K562 (cell line): ENCODE measurements at regions of chr6 and their contacts with region 1.

Region 1: GRCh38 chr6:30616811-30617564 is at the start of gene PPP1R10:
- DNase-seq: peak; percentile 96 to 100 (median 98)
- ATAC-seq: peak; percentile 77
- H3K4me3 ChIP-seq: peak within 1 kb of the TSS; percentile 68
- H3K27ac ChIP-seq: peak within 1 kb of the TSS; percentile 99
- H3K4me1 ChIP-seq: peaks cover 4 to 26% of the 10 kb centered on the region in 2 experiments; a peak in 4 of 5 replicates
- H3K27me3 ChIP-seq: no peaks in the 10 kb centered on the region
- CTCF ChIP-seq: peak in 1 of 3 experiments; percentile 7; a peak in 1 of 6 replicates
- EP300 ChIP-seq: peak; percentile 39; the same call in 1 of the 2 replicates
- POLR2A ChIP-seq: peak; percentile 100
- RAD21 ChIP-seq: no peak
- polyA plus RNA-seq, gene PPP1R10: 14.1 to 21.9 TPM

Region 2: GRCh38 chr6:30556066-30556905 is 60.7 kb before region 1 on chr6 and contains the start of gene GNL1:
- CTCF ChIA-PET with region 1: no interaction called
- POLR2A ChIA-PET with region 1: interaction called, 11 read pairs
- in situ Hi-C with region 1: no loop called
- intact Hi-C with region 1: no loop called
- DNase-seq: peak; percentile 97 to 99 (median 98)
- ATAC-seq: peak; percentile 90
- H3K4me3 ChIP-seq: peak within 1 kb of the TSS; percentile 80
- H3K27ac ChIP-seq: peak within 1 kb of the TSS; percentile 94
- H3K4me1 ChIP-seq: peaks cover 17 to 23% of the 10 kb centered on the region in 2 experiments; a peak in 4 of 5 replicates
- H3K27me3 ChIP-seq: no peaks in the 10 kb centered on the region
- CTCF ChIP-seq: no peak
- EP300 ChIP-seq: no peak
- POLR2A ChIP-seq: peak; percentile 8
- RAD21 ChIP-seq: no peak
- polyA plus RNA-seq, gene GNL1: 0.73 to 1.3 TPM

Region 3: DNA sequence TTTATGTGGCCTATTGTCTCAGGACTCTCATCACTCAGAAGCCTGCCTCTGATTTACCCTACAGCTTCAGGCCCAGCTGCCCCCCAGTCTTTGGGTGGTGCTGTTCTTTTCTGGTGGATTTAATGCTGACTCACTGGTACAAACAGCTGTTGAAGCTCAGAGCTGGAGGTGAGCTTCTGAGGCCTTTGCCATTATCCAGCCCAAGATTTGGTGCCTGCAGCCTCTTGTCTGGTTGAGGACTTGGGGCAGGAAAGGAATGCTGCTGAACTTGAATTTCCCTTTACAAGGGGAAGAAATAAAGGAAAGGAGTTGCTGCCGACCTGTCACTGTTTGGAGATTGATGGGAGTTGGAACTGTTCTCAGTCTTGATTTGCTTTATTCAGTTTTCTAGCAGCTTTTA is 26.0 kb before region 1 on chr6:
- CTCF ChIA-PET with region 1: no interaction called
- POLR2A ChIA-PET with region 1: interaction called, 310 read pairs
- in situ Hi-C with region 1: no loop called
- intact Hi-C with region 1: no loop called
- DNase-seq: peak in 2 of 4 experiments; percentile 29 to 36
- ATAC-seq: peak; percentile 60; the same call in 2 of the 3 replicates
- H3K4me3 ChIP-seq: no peak overlapping the region
- H3K27ac ChIP-seq: peak overlapping the region; percentile 8; the same call in 2 of the 3 replicates
- H3K4me1 ChIP-seq: peaks cover 3 to 4% of the 10 kb centered on the region in 2 experiments; a peak in 3 of 5 replicates
- H3K27me3 ChIP-seq: no peaks in the 10 kb centered on the region
- CTCF ChIP-seq: no peak
- EP300 ChIP-seq: no peak
- POLR2A ChIP-seq: no peak
- RAD21 ChIP-seq: no peak

Region 4: GRCh38 chr6:30656513-30656912 is 39.5 kb after region 1 on chr6:
- CTCF ChIA-PET with region 1: no interaction called
- POLR2A ChIA-PET with region 1: interaction called, 17 read pairs
- in situ Hi-C with region 1: no loop called
- intact Hi-C with region 1: no loop called
- DNase-seq: no peak
- ATAC-seq: no peak
- H3K4me3 ChIP-seq: no peak overlapping the region
- H3K27ac ChIP-seq: no peak overlapping the region
- H3K4me1 ChIP-seq: no peaks in the 10 kb centered on the region; a peak in 1 of 5 replicates
- H3K27me3 ChIP-seq: no peaks in the 10 kb centered on the region
- CTCF ChIP-seq: no peak
- EP300 ChIP-seq: no peak
- POLR2A ChIP-seq: no peak
- RAD21 ChIP-seq: no peak

Region 5: DNA sequence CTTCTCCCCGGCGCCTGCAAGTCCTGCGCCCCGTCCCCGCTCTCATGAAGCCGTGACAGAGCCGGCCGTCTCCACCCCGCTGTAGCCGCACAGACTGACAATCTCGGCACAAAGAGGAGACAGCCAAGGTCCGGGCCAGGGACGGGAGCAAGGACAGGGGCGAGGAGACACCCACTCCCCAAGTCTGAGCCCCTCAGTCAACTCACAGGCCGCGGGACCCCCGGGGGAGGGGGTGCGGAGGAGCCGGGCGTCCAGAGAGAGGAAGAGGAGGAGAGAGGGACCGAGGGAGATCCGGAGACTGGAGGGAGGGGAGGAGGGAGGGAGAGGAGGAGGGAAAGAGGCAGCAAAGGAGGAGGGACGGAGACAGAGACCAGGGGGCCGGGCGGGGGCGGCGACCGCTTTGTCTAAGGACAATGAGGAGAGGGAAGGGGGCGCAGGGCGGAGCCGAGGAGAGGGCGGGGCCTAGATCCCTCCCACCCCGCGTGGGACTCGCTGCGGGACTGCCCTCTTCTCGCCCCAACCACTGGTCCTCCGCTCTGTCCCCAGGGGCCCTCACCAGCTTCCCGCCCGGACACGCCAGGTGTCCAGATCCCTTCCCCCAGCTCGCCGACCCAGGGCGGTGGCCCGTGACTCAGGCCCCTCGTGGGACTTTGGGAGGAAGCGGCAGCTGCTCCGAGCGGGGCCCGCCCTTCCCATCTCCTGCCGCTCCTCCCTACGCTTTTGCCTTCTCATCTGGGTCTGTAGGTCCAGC is 70.1 kb after region 1 on chr6:
- CTCF ChIA-PET with region 1: no interaction called
- POLR2A ChIA-PET with region 1: interaction called, 22 read pairs
- in situ Hi-C with region 1: no loop called
- intact Hi-C with region 1: no loop called
- DNase-seq: peak; percentile 90 to 96 (median 92)
- ATAC-seq: peak; percentile 59
- H3K4me3 ChIP-seq: peak overlapping the region; percentile 81
- H3K27ac ChIP-seq: peak overlapping the region; percentile 88
- H3K4me1 ChIP-seq: peaks cover 50 to 88% of the 10 kb centered on the region in 2 experiments
- H3K27me3 ChIP-seq: no peaks in the 10 kb centered on the region
- CTCF ChIP-seq: no peak
- EP300 ChIP-seq: peak; percentile 63; the same call in 1 of the 2 replicates
- POLR2A ChIP-seq: peak; percentile 76
- RAD21 ChIP-seq: no peak

Region 6: DNA sequence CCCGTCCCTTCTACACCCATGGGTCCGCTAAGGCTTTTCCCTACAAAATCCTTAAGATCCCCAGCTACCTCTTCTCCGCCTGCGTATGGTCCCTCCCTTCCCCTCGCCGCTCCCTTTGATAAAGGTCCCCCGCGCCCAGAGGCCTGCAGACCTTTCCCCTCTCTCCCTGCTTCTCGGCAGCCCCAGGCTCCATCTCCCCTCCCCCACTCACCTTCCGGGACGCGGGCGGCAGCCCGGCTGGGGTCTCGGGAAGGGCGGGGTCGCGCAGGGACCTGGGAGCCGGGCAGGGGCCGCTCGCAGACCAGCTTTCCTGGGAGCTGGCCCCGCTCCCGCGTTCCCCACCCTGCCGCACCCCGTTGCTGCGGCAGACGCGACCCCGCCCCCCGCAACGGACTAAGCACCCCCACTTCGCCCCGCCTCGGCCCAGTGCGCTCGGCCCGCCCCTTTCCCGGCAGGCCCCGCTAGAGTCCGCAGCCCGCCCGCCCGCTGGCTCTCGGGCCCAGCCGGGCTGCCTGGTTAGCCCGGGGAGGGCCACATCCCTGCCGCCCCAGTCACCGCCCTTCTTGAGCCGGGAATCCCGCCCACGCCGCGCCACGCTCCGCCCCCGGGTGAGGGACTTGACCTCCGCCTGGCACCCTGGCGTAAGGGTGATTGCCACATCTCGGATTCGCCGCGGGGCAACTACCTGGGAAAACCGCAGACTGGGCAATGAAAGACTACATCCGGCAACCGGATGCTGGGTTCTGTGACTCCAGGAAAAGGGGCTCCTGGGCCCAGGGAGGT is 125.5 kb after region 1 on chr6 and contains the start of gene FLOT1:
- CTCF ChIA-PET with region 1: no interaction called
- POLR2A ChIA-PET with region 1: interaction called, 10 read pairs
- in situ Hi-C with region 1: no loop called
- intact Hi-C with region 1: no loop called
- DNase-seq: peak; percentile 97 to 98 (median 97)
- ATAC-seq: peak; percentile 92
- H3K4me3 ChIP-seq: peak within 1 kb of the TSS; percentile 91
- H3K27ac ChIP-seq: peak within 1 kb of the TSS; percentile 87
- H3K4me1 ChIP-seq: peaks cover 38 to 47% of the 10 kb centered on the region in 2 experiments
- H3K27me3 ChIP-seq: no peaks in the 10 kb centered on the region
- CTCF ChIP-seq: 0 out of 6 replicates have a peak, but pooled peaks of 1 of the 3 experiments have one; percentile 2
- EP300 ChIP-seq: peak; percentile 36
- POLR2A ChIP-seq: peak; percentile 81
- RAD21 ChIP-seq: peak in 1 of 2 experiments; percentile 41; a peak in 3 of 4 replicates
- polyA plus RNA-seq, gene FLOT1: 11.7 to 12.0 TPM

Region 7: GRCh38 chr6:32387589-32388340 is 1770.8 kb after region 1 on chr6:
- CTCF ChIA-PET with region 1: no interaction called
- POLR2A ChIA-PET with region 1: no interaction called
- in situ Hi-C with region 1: no loop called
- intact Hi-C with region 1: no loop called
- DNase-seq: no peak
- ATAC-seq: no peak
- H3K4me3 ChIP-seq: no peak overlapping the region
- H3K27ac ChIP-seq: no peak overlapping the region
- H3K4me1 ChIP-seq: no peaks in the 10 kb centered on the region
- H3K27me3 ChIP-seq: peaks cover 0 to 10% of the 10 kb centered on the region in 2 experiments; a peak in 2 of 5 replicates
- CTCF ChIP-seq: no peak
- EP300 ChIP-seq: no peak
- POLR2A ChIP-seq: no peak
- RAD21 ChIP-seq: no peak